ENCODE measurements at regions of chr19 and their contacts with region 1.

Region 1: GRCh38 chr19:10730923-10731322 is 13.0 kb downstream of the DNM2 start:
- DNase-seq: no peak
- H3K4me3 Mint-ChIP-seq: no peak overlapping the region
- H3K27ac Mint-ChIP-seq: peak overlapping the region; percentile 90
- H3K4me1 Mint-ChIP-seq: peaks cover 37% of the 10 kb centered on the region
- H3K27me3 Mint-ChIP-seq: no peaks in the 10 kb centered on the region

Region 2: DNA sequence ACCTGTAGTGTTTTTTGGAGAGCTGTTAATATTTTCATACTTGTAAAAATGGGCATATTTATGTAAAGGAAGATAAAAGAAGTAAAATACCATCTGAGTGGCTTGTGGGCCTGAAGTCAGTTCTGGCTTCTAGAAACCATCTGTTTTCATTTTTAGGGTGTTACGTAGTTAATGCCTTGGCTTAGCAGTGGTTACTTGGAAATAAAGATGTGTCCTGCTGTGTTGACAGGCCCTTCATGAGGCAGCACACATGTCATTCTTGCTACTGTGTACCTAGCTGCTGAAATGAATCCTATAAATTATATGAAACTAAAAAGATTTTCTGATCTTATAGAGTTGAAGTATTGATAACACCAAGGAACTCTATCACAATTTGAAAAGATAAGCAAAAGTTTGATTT is 60.7 kb before region 1 on chr19:
- intact Hi-C with region 1: no loop called
- DNase-seq: no peak
- H3K4me3 Mint-ChIP-seq: no peak overlapping the region
- H3K27ac Mint-ChIP-seq: no peak overlapping the region
- H3K4me1 Mint-ChIP-seq: peaks cover 20% of the 10 kb centered on the region
- H3K27me3 Mint-ChIP-seq: no peaks in the 10 kb centered on the region

Region 3: DNA sequence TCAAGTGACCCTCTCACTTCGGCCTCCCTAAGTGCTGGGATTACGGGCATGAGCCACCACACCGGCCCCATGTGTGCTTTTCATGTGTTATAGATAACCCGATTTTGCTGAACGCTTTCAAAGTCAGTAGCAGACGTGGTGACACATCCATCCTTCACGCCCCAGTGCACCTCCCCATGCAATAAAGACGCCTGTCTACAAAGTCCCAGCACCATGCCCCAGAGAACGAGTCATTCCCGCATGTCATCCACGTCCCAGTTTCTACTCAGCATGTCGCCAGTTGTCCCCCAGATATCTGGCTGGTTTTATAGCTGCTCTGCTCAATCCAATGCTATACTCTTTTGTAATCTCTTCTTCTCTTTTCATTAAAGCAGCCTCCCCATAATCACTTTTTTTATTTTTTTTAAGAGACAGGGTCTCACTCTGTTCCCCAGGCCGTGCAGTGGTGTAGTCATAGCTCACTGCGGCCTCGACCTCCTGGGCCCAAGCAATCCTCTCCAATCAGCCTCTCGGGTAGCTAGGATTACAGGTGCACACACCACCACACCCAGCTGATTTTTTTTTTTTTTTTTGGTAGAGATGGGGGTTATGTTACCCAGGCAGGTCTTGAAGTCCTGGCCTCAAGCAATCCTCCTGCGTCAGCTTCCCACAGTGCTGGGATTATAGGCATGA is 29.5 kb after region 1 on chr19:
- intact Hi-C with region 1: loop called (anchors 2 kb)
- DNase-seq: peak; percentile 75
- H3K4me3 Mint-ChIP-seq: peak overlapping the region; percentile 76
- H3K27ac Mint-ChIP-seq: peak overlapping the region; percentile 89
- H3K4me1 Mint-ChIP-seq: peaks cover 74% of the 10 kb centered on the region
- H3K27me3 Mint-ChIP-seq: no peaks in the 10 kb centered on the region

Region 4: GRCh38 chr19:10839114-10840050 is 108.5 kb after region 1 on chr19:
- intact Hi-C with region 1: no loop called
- DNase-seq: no peak
- H3K4me3 Mint-ChIP-seq: no peak overlapping the region
- H3K27ac Mint-ChIP-seq: no peak overlapping the region
- H3K4me1 Mint-ChIP-seq: peaks cover 10% of the 10 kb centered on the region
- H3K27me3 Mint-ChIP-seq: no peaks in the 10 kb centered on the region